Prostate gland (tissue), 2 donors: ENCODE measurements at regions of chr2 and their contacts with region 1.

Region 1: GRCh38 chr2:177552422-177553175 is 160.0 kb downstream of the AGPS start:
- DNase-seq: peak; percentile 80
- H3K4me3 ChIP-seq: peak overlapping the region; percentile 78 to 80
- H3K27ac ChIP-seq: peak overlapping the region; percentile 95 to 97
- H3K4me1 ChIP-seq: no peaks in the 10 kb centered on the region
- H3K27me3 ChIP-seq: no peaks in the 10 kb centered on the region
- CTCF ChIP-seq: peak in 1 of 4 experiments; percentile 12
- POLR2A ChIP-seq: no peak

Region 2: DNA sequence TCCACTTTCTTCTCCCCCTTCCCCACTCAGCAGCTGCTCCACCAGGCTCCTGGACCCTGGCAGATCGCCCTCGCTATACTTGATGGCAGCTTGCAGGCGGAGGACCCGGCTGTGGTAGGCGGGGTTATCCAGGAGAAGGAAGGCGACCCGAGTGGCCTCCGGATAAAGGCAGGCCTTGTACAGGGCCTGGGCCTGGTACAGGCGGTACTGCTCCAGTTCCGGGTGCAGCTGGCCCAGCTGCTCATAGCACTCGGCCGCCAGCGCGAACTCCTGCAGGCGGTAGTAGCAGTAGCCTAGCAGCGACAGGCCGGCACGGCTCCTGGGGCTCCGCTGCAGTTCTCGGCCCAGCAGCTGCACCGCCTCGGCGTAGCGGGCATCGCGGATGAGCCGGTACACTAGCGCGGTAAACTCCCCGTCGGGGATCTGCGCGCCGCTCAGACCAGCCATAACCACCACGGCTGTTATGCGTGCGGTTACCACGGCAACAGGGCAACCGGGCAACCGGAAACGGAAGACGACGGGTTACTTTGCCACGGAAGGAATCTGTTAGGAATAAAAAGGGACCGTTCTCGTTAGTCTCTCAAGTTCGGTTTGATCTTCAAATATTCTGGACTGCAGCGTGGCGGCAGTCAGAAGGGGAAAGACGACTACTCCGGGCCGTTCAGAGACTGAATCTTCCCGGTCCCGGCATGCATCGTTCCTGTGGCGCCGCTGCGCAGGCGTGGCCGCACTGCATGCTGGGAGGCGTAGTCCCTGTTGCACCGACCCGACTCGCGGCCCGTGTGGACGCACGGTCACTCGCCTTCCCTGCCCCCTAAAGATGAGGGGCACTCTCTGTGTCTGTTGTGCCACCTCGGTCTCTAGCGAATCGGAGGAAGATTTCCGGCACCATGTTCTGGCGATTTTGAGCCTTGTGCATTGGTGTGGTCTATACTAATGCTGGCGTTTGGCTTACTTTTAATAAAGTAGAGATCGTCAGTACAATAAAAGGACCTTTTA is 66.0 kb after region 1 on chr2:
- intact Hi-C with region 1: loop called (anchors 5 kb)
- DNase-seq: peak; percentile 88
- H3K4me3 ChIP-seq: peak overlapping the region; percentile 50 to 72
- H3K27ac ChIP-seq: peak overlapping the region; percentile 89 to 96
- H3K4me1 ChIP-seq: no peaks in the 10 kb centered on the region
- H3K27me3 ChIP-seq: no peaks in the 10 kb centered on the region
- CTCF ChIP-seq: no peak
- POLR2A ChIP-seq: no peak